Calu3 (cell line): ENCODE measurements at regions of chr9 and their contacts with region 1.

Region 1: DNA sequence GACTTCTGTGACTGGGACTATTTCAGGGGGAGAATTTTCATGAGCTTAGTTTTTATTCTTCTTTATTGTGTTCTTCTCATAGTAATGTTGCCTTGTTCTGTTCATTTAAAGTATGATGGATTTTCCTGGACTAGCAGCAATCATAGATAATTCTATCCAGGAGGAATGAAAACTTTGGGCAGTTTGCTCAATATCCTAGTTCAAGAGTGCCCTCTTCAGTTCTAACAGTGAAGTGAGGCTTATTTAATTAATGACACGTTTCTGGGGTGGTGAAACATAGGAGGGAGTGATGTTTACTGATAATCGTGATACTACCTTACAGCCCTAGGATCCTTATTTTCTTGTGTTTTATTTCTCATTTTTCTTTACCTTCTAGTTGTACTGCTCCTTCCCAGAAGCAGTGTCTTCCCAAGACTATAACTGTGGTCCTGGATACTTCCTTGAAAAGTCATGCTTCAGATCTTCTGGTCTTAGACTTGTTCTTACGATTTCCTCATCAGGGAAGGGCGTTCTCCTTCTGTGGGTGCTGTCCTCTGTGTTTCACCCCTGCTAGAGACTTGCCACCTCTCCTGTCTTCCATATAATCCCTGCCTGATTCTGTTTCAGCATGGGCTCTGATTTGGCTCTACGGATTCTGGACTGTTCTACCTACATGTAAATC is 57.4 kb downstream of the CFAP95 start:
- DNase-seq: no peak
- H3K4me3 Mint-ChIP-seq: no peak overlapping the region
- H3K27ac Mint-ChIP-seq: peak overlapping the region; percentile 11
- H3K4me1 Mint-ChIP-seq: peaks cover 13% of the 10 kb centered on the region
- H3K27me3 Mint-ChIP-seq: no peaks in the 10 kb centered on the region
- CTCF ChIP-seq: peak; percentile 40

Region 2: GRCh38 chr9:69421908-69422801 is 455.8 kb before region 1 on chr9:
- CTCF ChIA-PET with region 1: no interaction called
- intact Hi-C with region 1: loop called (anchors 2 kb)
- DNase-seq: peak; percentile 61
- H3K4me3 Mint-ChIP-seq: no peak overlapping the region
- H3K27ac Mint-ChIP-seq: peak overlapping the region; percentile 47
- H3K4me1 Mint-ChIP-seq: peaks cover 10% of the 10 kb centered on the region
- H3K27me3 Mint-ChIP-seq: no peaks in the 10 kb centered on the region
- CTCF ChIP-seq: peak; percentile 60

Region 3: GRCh38 chr9:69549310-69550202 is 328.4 kb before region 1 on chr9:
- CTCF ChIA-PET with region 1: no interaction called
- intact Hi-C with region 1: loop called (anchors 5 kb)
- DNase-seq: peak; percentile 30
- H3K4me3 Mint-ChIP-seq: no peak overlapping the region
- H3K27ac Mint-ChIP-seq: no peak overlapping the region
- H3K4me1 Mint-ChIP-seq: peaks cover 38% of the 10 kb centered on the region
- H3K27me3 Mint-ChIP-seq: no peaks in the 10 kb centered on the region
- CTCF ChIP-seq: peak; percentile 29

Region 4: GRCh38 chr9:69745716-69746437 is 132.1 kb before region 1 on chr9:
- CTCF ChIA-PET with region 1: no interaction called
- intact Hi-C with region 1: loop called (anchors 5 kb)
- DNase-seq: no peak
- H3K4me3 Mint-ChIP-seq: no peak overlapping the region
- H3K27ac Mint-ChIP-seq: peak overlapping the region; percentile 39
- H3K4me1 Mint-ChIP-seq: peaks cover 26% of the 10 kb centered on the region
- H3K27me3 Mint-ChIP-seq: no peaks in the 10 kb centered on the region
- CTCF ChIP-seq: no peak

Region 5: DNA sequence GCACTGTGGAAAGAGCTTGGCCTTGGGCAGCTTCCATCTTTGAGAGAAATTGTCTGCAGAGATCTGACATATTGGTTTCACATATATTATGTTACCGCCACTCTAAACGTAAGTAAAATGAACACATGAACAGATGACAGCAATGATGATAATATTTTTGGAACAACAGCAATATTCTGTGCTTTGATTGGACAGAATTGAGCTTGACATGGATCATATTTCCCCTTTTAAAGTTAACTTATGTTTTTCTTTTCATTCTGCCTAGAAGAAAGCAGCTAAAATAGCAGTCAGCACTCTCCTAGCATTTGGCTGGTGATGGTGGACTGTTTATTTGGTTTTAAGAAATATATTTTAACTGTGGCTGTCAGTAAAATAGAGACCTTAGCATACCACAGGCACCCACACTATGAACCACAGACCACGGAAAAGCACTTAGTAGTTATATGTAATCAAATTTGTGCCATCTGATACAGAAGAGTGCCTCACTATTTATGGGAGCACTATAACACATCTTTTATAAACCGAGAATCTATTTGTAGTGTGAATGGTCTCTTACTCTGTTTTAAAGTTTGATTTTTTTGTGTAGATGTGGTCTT is 59.1 kb before region 1 on chr9:
- CTCF ChIA-PET with region 1: no interaction called
- intact Hi-C with region 1: loop called (anchors 10 kb)
- DNase-seq: no peak
- H3K4me3 Mint-ChIP-seq: no peak overlapping the region
- H3K27ac Mint-ChIP-seq: no peak overlapping the region
- H3K4me1 Mint-ChIP-seq: peaks cover 9% of the 10 kb centered on the region
- H3K27me3 Mint-ChIP-seq: no peaks in the 10 kb centered on the region
- CTCF ChIP-seq: no peak

Region 6: DNA sequence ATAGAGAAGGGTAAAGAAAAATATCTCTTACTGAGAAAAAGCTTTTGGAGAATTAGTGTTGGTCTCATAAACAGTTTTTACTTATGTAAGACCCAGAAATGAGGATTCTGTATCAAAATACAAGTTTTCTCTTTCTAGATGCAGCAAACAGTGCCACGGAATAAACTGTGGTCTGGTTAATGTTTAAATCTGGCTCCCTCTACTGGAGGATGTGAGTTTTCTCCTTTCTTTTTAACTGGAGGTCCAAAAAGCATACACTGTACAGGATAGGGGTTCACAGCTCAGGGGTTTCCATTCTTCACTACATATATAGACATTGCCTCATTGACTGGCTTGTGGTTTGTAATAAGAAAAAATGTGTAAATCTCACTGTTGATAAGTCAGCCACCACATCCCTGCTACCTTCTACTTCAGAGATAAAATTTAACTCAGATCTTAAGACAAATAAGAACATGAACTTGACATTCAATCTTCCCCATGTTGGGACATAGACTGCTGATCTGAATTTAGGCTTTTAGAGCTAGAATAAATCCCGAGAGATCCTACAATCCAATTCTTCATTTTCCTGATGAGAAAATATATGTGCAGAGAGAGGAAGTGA is 41.6 kb after region 1 on chr9:
- CTCF ChIA-PET with region 1: no interaction called
- intact Hi-C with region 1: loop called (anchors 1 kb)
- DNase-seq: no peak
- H3K4me3 Mint-ChIP-seq: no peak overlapping the region
- H3K27ac Mint-ChIP-seq: no peak overlapping the region
- H3K4me1 Mint-ChIP-seq: no peaks in the 10 kb centered on the region
- H3K27me3 Mint-ChIP-seq: no peaks in the 10 kb centered on the region
- CTCF ChIP-seq: peak; percentile 50